Endothelial cell of umbilical vein (primary cell): ENCODE measurements at regions of chr20 and their contacts with region 1.

Region 1: GRCh38 chr20:43914311-43915210 is at the start of gene TOX2:
- DNase-seq: no peak
- H3K4me3 ChIP-seq: peak within 1 kb of the TSS; percentile 50 to 56 (median 52)
- H3K27ac ChIP-seq: no peak within 1 kb of the TSS
- H3K4me1 ChIP-seq: peaks cover 24% of the 10 kb centered on the region
- H3K27me3 ChIP-seq: peaks cover 0 to 4% of the 10 kb centered on the region in 2 experiments
- CTCF ChIP-seq: no peak
- POLR2A ChIP-seq: no peak
- total RNA-seq, gene TOX2: 18.6 and 25.7 TPM in 2 replicates

Region 2: DNA sequence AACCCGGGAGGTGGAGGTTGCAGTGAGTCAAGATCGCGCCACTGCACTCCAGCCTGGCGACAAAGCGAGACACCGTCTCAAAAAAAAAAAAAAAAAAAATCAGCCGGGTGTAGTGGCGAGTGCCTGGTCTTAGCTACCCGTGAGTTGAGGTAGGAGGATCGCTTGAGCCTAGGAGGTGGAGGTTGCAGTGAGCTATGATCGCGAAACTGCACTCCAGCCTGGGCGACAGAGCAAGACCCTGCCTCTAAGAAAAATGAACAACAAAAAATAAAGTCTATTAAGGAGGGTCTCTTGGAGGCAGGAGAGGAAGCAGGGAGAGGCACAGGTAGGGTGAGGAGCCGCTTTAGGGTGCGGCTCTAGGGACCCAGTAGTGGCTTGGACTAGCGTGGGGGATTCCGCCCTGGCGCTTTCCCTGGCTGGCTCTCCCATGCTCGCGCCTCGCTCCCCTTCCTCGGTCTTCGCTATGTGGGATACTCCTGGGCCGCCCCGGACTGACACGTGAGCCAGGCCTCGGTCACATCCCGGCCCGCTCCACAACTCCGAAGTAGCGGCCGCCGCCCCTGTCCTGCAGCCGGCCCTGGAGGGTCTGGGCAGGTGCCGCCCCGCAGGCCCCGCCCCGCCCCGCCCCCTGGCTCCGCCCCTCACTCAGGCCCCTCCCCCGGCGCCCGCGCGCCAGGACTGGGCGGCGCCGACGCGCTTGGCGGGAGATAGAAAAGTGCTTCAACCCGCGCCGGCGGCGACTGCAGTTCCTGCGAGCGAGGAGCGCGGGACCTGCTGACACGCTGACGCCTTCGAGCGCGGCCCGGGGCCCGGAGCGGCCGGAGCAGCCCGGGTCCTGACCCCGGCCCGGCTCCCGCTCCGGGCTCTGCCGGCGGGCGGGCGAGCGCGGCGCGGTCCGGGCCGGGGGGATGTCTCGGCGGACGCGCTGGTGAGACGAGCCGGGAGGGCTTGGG is 247.9 kb before region 1 on chr20 and contains the start of gene MYBL2:
- CTCF ChIA-PET with region 1: no interaction called
- POLR2A ChIA-PET with region 1: no interaction called
- dilution Hi-C with region 1: no loop called
- intact Hi-C with region 1: loop called (anchors 10 kb)
- DNase-seq: peak; percentile 48
- H3K4me3 ChIP-seq: peak within 1 kb of the TSS; percentile 35 to 47 (median 43)
- H3K27ac ChIP-seq: peak within 1 kb of the TSS; percentile 14
- H3K4me1 ChIP-seq: peaks cover 15% of the 10 kb centered on the region
- H3K27me3 ChIP-seq: peaks cover 0 to 7% of the 10 kb centered on the region in 2 experiments
- CTCF ChIP-seq: no peak
- POLR2A ChIP-seq: no peak
- total RNA-seq, gene MYBL2: 105 and 107 TPM in 2 replicates

Region 3: DNA sequence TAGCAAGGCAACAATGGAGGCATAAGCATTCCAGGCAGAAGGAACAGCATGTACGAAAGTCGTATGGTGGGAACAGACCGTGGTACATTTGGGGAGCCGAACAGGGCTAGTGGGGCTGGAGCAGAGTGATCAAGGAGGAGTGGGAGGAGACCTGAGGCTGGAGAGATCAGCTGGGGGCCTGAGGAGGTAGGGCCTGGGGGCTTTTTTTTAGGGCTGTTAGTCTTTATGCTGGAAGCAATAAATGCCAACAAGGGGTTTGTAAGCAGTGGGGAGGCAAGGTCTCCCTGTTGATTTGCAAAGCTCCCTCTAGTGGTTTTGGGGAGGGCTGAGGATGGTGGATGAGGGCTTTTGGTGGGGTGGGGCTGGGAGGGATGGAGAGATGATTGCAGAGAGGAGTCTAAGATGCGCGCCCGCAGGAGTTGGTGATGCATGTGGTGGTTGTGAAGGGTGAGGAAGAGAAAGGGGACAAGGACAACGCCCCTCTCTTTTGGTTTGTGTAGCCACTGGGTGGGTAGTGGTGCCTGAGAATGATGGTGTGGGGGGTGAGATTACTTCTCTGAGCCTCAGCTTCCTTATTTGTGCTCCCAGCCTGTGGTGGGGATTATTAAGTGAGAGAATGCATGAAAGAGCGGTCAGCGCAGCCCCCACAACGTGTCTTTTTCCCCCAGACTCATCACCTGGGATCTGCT is 74.0 kb before region 1 on chr20:
- CTCF ChIA-PET with region 1: interaction called, 19 read pairs
- POLR2A ChIA-PET with region 1: no interaction called
- dilution Hi-C with region 1: no loop called
- intact Hi-C with region 1: loop called (anchors 1 kb)
- DNase-seq: no peak
- H3K4me3 ChIP-seq: no peak overlapping the region
- H3K27ac ChIP-seq: no peak overlapping the region
- H3K4me1 ChIP-seq: peaks cover 24% of the 10 kb centered on the region
- H3K27me3 ChIP-seq: no peaks in the 10 kb centered on the region
- CTCF ChIP-seq: peak; percentile 10 to 52
- POLR2A ChIP-seq: no peak

Region 4: GRCh38 chr20:43942661-43943290 is 28.2 kb after region 1 on chr20:
- CTCF ChIA-PET with region 1: interaction called, 3 read pairs
- POLR2A ChIA-PET with region 1: no interaction called
- dilution Hi-C with region 1: no loop called
- intact Hi-C with region 1: loop called (anchors 1 kb)
- DNase-seq: peak; percentile 78
- H3K4me3 ChIP-seq: no peak overlapping the region
- H3K27ac ChIP-seq: peak overlapping the region; percentile 75
- H3K4me1 ChIP-seq: peaks cover 46% of the 10 kb centered on the region
- H3K27me3 ChIP-seq: no peaks in the 10 kb centered on the region
- CTCF ChIP-seq: no peak
- POLR2A ChIP-seq: no peak

Region 5: DNA sequence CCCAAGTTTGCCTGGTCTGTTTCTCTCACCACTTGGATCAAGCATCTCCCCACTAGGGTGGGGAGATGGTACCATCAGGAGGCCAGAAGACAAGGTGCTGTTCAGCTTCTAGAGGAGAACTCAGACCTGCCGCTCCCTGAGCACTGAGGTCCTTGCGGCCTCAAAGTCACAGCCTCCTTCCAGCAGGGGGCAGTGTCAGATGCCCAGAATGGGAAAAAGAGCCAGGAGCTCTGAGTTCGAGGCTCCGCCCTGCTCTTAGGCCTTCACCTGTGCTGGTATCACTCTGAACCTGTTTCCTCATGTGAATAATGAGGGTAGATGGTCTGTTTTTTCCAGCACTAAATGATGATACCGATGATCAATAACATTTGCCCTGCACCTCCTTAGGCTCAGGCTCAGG is 68.8 kb after region 1 on chr20:
- CTCF ChIA-PET with region 1: interaction called, 3 read pairs
- POLR2A ChIA-PET with region 1: no interaction called
- dilution Hi-C with region 1: no loop called
- intact Hi-C with region 1: loop called (anchors 2 kb)
- DNase-seq: no peak
- H3K4me3 ChIP-seq: no peak overlapping the region
- H3K27ac ChIP-seq: peak overlapping the region; percentile 71
- H3K4me1 ChIP-seq: peaks cover 23% of the 10 kb centered on the region
- H3K27me3 ChIP-seq: no peaks in the 10 kb centered on the region
- CTCF ChIP-seq: peak; percentile 22 to 33
- POLR2A ChIP-seq: no peak

Region 6: DNA sequence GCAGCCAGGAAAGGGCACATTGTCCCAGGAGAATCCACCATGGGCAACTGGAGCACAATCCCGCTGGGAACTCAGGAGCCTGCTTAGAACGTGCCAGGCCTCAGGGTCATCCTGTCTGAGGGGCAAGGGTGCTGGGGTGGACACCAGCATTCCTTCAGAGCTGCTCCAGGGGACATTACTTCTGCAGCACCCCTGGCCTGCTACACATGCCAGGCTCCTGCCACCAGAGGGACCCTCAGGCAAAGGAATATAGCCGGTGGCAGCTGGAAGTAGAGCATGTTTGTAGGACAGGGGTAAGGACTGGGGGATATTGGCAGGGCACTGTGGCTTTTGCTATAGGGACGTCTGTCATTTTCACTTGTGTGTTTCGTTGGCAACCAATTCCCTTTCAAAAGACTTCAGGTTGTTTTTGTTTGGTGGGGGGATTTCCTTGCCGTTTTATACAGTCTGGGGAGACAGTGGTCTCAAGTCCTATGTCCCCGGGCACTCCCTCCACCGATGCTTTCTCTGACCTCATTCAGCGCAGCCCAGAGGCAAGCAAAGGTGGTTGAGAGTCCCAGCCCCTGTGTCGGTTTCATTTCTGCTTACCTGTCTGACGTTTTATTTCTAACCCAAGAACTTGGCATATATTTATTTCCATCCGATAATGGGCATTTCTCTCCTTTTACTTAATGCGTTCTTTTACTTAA is 141.6 kb after region 1 on chr20:
- CTCF ChIA-PET with region 1: no interaction called
- POLR2A ChIA-PET with region 1: no interaction called
- dilution Hi-C with region 1: no loop called
- intact Hi-C with region 1: no loop called
- DNase-seq: peak; percentile 26
- H3K4me3 ChIP-seq: no peak overlapping the region
- H3K27ac ChIP-seq: no peak overlapping the region
- H3K4me1 ChIP-seq: no peaks in the 10 kb centered on the region
- H3K27me3 ChIP-seq: no peaks in the 10 kb centered on the region
- CTCF ChIP-seq: peak; percentile 43 to 68
- POLR2A ChIP-seq: no peak

Region 7: DNA sequence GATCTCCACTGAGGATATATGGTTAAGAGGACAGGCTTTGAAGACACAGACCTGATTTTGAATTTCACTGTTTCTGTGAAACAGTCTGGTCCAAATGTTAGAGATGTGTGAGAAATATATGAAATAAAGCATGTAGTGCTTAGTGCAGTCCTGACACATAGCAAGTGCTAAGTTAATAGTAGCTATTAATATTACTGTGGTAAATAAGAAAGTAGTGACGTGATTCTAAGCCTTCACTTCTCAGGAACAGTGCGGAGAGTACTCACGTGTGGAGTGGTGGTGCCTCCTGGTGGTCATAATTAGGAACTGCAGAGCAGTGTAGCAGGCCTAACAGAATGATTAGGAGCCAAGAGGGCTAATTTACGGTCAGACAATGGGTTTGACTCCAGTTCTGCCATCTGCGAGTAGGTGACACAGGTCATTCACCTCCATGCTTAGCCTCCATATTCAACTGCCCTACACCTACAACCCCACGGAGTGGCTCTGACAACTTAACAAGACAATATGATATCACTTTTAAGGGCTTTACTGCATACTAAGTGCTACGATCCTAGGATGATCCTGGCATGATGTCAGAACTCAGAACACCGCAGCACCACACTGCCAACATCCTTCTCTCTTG is 166.2 kb after region 1 on chr20:
- CTCF ChIA-PET with region 1: interaction called, 16 read pairs
- POLR2A ChIA-PET with region 1: no interaction called
- dilution Hi-C with region 1: no loop called
- intact Hi-C with region 1: loop called (anchors 1 kb)
- DNase-seq: peak; percentile 79
- H3K4me3 ChIP-seq: no peak overlapping the region
- H3K27ac ChIP-seq: no peak overlapping the region
- H3K4me1 ChIP-seq: no peaks in the 10 kb centered on the region
- H3K27me3 ChIP-seq: no peaks in the 10 kb centered on the region
- CTCF ChIP-seq: peak; percentile 81 to 98
- POLR2A ChIP-seq: no peak